Activated CD4-positive, alpha-beta memory T cell treated with anti-CD3 and anti-CD28 coated beads for 36 hours (primary cell): ENCODE measurements at regions of chr6 and their contacts with region 1.

Region 1: DNA sequence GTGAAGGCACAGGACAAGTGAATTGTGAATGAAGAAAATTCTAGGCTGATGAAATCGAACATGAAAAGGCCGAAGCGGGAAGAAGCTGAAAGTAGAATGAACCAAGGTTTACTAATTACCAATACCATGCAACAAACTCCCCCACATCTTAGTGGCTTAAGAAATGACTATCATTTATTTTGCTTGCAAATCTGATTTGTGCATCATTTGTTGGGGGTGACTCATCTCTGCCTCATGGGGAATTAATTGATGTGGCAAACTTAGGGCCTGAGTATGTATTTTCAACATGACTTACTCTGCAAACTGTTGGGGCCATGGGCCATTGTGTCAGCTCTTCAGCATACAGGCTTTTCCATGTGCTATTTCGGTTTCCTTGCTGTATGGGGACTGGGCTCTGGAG is 26.8 kb downstream of the PPP1R14C start:
- DNase-seq: peak; percentile 71
- H3K4me3 Mint-ChIP-seq: no peak overlapping the region
- H3K27ac Mint-ChIP-seq: peak overlapping the region; percentile 70
- H3K4me1 Mint-ChIP-seq: peaks cover 16% of the 10 kb centered on the region
- H3K27me3 Mint-ChIP-seq: peaks cover 25% of the 10 kb centered on the region

Region 2: DNA sequence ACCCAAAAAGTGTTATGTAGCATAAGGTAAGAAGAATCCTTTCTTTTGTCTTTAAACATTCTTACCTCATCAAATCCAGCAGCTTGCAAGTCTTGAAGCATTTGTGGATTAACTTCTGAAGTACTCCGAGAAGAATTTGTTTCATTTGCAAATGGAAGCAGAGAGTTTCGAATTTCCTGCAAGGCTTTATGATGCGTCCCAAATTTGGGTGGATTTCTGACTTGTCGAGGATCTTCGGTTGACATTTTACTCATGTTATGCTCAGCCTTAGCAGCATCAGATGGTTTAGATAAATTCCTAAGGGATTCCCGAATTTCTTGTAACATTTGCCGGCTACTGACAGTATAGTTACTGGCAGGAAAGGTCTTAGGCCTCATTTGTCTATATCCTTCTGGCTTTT is 467.9 kb before region 1 on chr6:
- CTCF ChIA-PET with region 1: no interaction called
- POLR2A ChIA-PET with region 1: no interaction called
- intact Hi-C with region 1: no loop called
- DNase-seq: no peak
- H3K4me3 Mint-ChIP-seq: no peak overlapping the region
- H3K27ac Mint-ChIP-seq: no peak overlapping the region
- H3K4me1 Mint-ChIP-seq: peaks cover 32% of the 10 kb centered on the region
- H3K27me3 Mint-ChIP-seq: no peaks in the 10 kb centered on the region

Region 3: GRCh38 chr6:149903938-149904611 is 265.5 kb before region 1 on chr6:
- CTCF ChIA-PET with region 1: no interaction called
- POLR2A ChIA-PET with region 1: no interaction called
- intact Hi-C with region 1: no loop called
- DNase-seq: no peak
- H3K4me3 Mint-ChIP-seq: no peak overlapping the region
- H3K27ac Mint-ChIP-seq: no peak overlapping the region
- H3K4me1 Mint-ChIP-seq: no peaks in the 10 kb centered on the region
- H3K27me3 Mint-ChIP-seq: peaks cover 7% of the 10 kb centered on the region

Region 4: GRCh38 chr6:150153905-150154492 is 15.6 kb before region 1 on chr6:
- CTCF ChIA-PET with region 1: interaction called, 3 read pairs
- POLR2A ChIA-PET with region 1: no interaction called
- intact Hi-C with region 1: loop called (anchors 1 kb)
- DNase-seq: peak; percentile 22
- H3K4me3 Mint-ChIP-seq: no peak overlapping the region
- H3K27ac Mint-ChIP-seq: no peak overlapping the region
- H3K4me1 Mint-ChIP-seq: peaks cover 22% of the 10 kb centered on the region
- H3K27me3 Mint-ChIP-seq: peaks cover 51% of the 10 kb centered on the region

Region 5: DNA sequence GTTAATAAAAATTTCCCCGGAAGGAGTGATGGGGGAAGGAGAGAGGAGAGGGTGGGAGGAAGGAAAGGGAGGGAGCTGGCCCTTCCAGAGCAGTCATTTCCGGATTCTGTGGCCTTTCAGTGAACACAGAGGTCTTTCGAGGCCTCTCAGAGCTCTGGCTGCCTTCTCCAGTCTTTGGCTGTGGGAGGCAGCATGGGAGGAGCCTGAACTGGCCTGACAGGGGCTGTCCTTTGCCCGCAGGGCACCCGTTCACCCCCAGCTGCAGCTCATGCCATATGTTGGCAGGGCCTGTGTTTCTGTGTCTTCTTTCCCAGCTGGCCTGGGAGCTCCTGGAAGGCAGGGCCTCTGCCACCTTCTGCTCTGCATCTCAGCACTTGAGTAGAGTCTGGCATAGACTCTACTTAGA is 68.7 kb after region 1 on chr6:
- CTCF ChIA-PET with region 1: no interaction called
- POLR2A ChIA-PET with region 1: no interaction called
- intact Hi-C with region 1: loop called (anchors 1 kb)
- DNase-seq: no peak
- H3K4me3 Mint-ChIP-seq: no peak overlapping the region
- H3K27ac Mint-ChIP-seq: no peak overlapping the region
- H3K4me1 Mint-ChIP-seq: peaks cover 36% of the 10 kb centered on the region
- H3K27me3 Mint-ChIP-seq: peaks cover 6% of the 10 kb centered on the region

Region 6: GRCh38 chr6:150256618-150257272 is 87.1 kb after region 1 on chr6:
- CTCF ChIA-PET with region 1: no interaction called
- POLR2A ChIA-PET with region 1: interaction called, 3 read pairs
- intact Hi-C with region 1: loop called (anchors 1 kb)
- DNase-seq: no peak
- H3K4me3 Mint-ChIP-seq: no peak overlapping the region
- H3K27ac Mint-ChIP-seq: no peak overlapping the region
- H3K4me1 Mint-ChIP-seq: peaks cover 38% of the 10 kb centered on the region
- H3K27me3 Mint-ChIP-seq: peaks cover 29% of the 10 kb centered on the region

Region 7: GRCh38 chr6:150301846-150302519 is 132.4 kb after region 1 on chr6:
- CTCF ChIA-PET with region 1: no interaction called
- POLR2A ChIA-PET with region 1: no interaction called
- intact Hi-C with region 1: loop called (anchors 1 kb)
- DNase-seq: peak; percentile 46
- H3K4me3 Mint-ChIP-seq: no peak overlapping the region
- H3K27ac Mint-ChIP-seq: no peak overlapping the region
- H3K4me1 Mint-ChIP-seq: peaks cover 8% of the 10 kb centered on the region
- H3K27me3 Mint-ChIP-seq: peaks cover 34% of the 10 kb centered on the region

Region 8: DNA sequence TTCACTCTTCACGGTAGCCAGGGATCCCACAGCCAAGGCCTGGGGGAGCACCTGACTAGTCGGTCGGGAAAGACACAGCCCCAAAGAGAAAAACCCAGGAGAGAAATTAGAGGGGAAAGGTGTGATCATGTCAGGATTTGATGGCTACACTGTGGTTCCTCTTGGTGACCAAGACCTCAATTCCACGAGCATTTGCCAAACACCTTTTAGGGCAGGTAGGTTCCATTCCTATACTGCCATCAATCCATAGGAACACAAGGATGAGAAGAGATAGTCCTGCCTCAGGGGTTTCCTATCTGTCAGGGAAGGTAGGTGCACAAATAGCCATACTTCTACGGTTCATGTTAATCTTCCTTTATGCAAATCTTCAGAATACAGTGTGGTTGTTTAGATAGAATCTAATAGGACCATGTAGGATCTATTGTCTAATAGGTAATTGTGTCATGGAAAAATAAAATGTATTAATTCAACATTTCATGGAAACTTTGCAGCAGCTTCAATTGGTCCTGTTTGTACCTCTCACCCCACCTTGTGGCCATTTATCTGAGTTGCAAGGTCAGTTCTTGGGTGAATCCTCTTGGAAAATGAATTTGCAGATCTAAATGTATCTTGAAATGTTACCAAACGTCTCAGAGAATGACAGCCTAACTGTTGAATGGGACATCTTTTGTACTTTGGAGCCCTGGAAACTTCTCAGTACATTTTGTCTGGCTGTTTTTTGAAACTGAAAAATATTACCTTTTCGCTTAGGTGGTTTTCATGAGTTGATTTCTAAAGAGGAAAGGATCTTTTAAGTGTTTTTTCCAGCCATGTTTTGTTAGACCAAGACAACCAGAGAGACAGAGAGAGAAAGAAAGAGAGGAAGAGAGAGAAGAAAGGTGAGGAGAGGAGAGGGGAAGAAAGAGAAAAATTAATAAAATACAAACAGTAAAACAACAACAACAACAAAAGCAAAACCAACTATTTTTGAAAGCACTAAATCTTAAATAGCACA is 165.5 kb after region 1 on chr6:
- CTCF ChIA-PET with region 1: no interaction called
- POLR2A ChIA-PET with region 1: no interaction called
- intact Hi-C with region 1: loop called (anchors 1 kb)
- DNase-seq: peak; percentile 46
- H3K4me3 Mint-ChIP-seq: no peak overlapping the region
- H3K27ac Mint-ChIP-seq: no peak overlapping the region
- H3K4me1 Mint-ChIP-seq: no peaks in the 10 kb centered on the region
- H3K27me3 Mint-ChIP-seq: peaks cover 20% of the 10 kb centered on the region